Caco-2 (cell line): ENCODE measurements at regions of chr7 and their contacts with region 1.

Region 1: DNA sequence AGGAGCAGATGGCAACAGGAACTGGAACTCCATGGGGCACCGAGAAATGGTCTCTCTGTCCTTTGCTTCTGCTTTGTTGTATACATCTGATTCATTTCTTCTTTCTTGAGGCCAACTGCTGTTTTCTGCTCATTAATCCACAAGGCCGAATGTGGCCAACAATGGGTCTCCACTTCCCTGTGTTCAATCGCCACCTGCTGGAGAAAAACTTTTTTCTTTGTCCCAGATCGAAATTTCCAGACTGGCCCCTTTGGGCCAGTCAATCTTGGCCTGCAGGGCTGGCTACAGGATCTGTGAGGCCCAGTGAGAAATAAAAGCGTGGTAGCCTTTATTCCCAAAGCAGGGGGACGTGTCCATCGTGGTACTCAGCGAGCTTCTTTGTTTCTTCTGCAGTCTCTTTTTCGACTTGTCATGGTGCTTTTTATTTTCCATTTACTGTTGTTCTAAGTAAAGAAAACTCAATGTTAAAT is 58.8 kb downstream of the PARP12 start:
- DNase-seq: peak; percentile 38 to 67
- H3K4me3 ChIP-seq: no peak overlapping the region
- H3K4me3 Mint-ChIP-seq: no peak overlapping the region
- H3K27ac Mint-ChIP-seq: no peak overlapping the region
- H3K4me1 ChIP-seq: no peaks in the 10 kb centered on the region
- H3K4me1 Mint-ChIP-seq: no peaks in the 10 kb centered on the region
- H3K27me3 ChIP-seq: no peaks in the 10 kb centered on the region
- H3K27me3 Mint-ChIP-seq: no peaks in the 10 kb centered on the region
- CTCF ChIP-seq: peak; percentile 50 to 57

Region 2: DNA sequence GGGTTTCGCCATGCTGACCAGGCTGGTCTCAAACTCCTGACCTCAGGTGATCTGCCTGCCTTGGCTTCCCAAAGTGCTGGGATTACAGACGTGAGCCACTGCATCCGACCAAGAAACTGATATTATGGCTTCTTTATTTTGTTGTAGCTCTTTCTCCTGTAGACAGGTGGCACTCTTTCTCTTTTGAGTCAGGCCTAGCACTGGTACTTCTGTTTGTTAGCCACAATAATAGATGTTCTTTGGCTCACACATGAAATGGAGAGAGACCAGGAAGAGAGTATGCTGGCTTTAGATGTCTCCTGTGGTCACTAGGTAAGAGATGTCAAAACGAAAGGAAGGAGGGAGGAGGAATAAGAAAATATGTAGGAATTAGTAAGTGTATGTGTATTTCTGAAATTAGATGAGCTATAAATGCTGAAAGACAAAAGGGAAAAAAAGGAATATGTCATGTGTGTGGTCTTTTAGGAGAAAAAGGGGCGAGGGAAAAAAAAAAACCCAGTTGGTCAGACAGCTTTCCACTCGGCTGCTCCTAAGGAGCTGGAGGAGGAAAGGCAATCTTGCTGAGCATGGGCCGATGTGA is 401.7 kb before region 1 on chr7:
- CTCF ChIA-PET with region 1: interaction called, 12 read pairs
- POLR2A ChIA-PET with region 1: no interaction called
- intact Hi-C with region 1: loop called (anchors 1 kb)
- DNase-seq: peak in 1 of 2 experiments; percentile 25
- H3K4me3 ChIP-seq: no peak overlapping the region
- H3K4me3 Mint-ChIP-seq: no peak overlapping the region
- H3K27ac Mint-ChIP-seq: no peak overlapping the region
- H3K4me1 ChIP-seq: no peaks in the 10 kb centered on the region
- H3K4me1 Mint-ChIP-seq: no peaks in the 10 kb centered on the region
- H3K27me3 ChIP-seq: no peaks in the 10 kb centered on the region
- H3K27me3 Mint-ChIP-seq: no peaks in the 10 kb centered on the region
- CTCF ChIP-seq: peak; percentile 44 to 62

Region 3: DNA sequence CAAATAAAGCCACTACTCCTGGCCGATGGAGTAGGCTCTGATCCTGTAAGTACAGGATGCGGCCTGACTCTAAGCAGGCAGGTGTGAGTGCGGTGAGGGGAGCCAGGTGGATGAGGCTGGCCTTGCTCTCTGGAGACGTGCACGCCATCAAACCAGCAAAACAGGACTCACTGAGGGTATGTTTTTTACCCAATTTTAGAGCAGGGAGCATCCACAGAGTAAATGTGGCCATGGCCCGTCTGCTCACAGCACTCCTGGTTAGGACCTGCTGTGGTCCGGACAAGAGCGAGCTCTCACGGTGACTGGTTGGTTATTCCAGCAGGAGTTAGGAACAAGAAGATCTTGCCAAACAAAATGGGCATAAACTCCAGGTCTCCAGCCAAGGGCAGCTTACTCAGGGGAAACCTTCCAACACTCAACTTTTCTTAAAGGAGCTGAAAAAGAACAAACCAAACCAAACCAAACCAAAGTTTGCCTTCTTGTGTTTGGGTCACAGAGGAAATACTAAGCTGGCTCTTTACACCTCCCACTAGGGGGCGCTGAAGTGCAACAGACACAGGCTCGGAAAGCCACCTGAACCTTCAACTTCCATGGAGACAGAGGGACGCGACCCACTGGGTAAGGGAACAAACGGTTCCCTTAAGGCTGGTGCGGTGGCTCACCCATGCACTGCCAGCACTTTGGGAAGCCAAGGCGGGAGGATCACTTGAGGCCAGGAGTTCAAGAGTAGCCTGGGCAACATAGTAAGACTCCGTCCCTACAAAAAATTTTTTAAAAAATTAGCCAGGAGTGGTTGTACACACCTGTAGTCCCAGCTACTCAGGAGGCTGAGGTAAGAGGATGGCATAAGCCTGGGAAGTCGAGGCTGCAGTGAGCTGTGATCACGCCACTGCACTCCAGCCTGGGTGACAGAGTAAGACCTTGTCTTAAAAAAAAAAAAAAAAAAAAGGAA is 358.1 kb before region 1 on chr7:
- CTCF ChIA-PET with region 1: interaction called, 8 read pairs
- POLR2A ChIA-PET with region 1: no interaction called
- intact Hi-C with region 1: loop called (anchors 1 kb)
- DNase-seq: peak; percentile 83 to 88
- H3K4me3 ChIP-seq: no peak overlapping the region
- H3K4me3 Mint-ChIP-seq: no peak overlapping the region
- H3K27ac Mint-ChIP-seq: peak overlapping the region; percentile 64
- H3K4me1 ChIP-seq: peaks cover 26% of the 10 kb centered on the region; the same call in 1 of the 2 replicates
- H3K4me1 Mint-ChIP-seq: peaks cover 61% of the 10 kb centered on the region
- H3K27me3 ChIP-seq: no peaks in the 10 kb centered on the region
- H3K27me3 Mint-ChIP-seq: no peaks in the 10 kb centered on the region
- CTCF ChIP-seq: peak; percentile 80 to 90

Region 4: DNA sequence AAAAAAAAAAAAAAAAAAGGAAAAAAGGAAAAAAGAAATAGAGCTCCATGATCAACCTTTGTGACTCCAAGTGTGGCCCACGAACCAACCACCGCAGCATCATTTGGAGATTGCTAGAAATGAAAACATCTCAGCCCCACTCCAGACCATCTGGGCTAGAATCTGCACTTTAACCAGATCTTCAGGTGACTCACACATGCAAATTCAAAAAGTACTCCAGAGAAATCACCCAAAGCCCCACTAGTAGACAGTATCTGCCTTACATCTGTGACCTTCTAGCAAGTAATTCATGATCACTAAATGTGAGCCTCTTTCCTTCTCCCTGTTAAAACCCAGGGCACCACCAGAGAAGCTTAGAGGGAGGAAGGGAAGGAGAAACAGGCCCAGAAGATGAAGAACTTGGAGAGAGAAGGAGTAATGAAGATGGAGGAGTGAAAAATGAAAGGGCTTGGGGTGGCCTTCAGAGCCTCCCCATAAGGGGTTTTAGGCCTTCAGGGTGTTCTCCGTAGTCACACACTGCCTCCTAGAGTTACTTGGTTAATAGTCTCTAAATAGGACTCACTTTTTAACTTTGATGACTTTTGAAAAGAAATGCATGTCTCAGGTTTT is 300.3 kb after region 1 on chr7:
- CTCF ChIA-PET with region 1: interaction called, 11 read pairs
- POLR2A ChIA-PET with region 1: no interaction called
- intact Hi-C with region 1: no loop called
- DNase-seq: peak in 1 of 2 experiments; percentile 23
- H3K4me3 ChIP-seq: no peak overlapping the region
- H3K4me3 Mint-ChIP-seq: no peak overlapping the region
- H3K27ac Mint-ChIP-seq: no peak overlapping the region
- H3K4me1 ChIP-seq: no peaks in the 10 kb centered on the region; the same call in 1 of the 2 replicates
- H3K4me1 Mint-ChIP-seq: peaks cover 6% of the 10 kb centered on the region
- H3K27me3 ChIP-seq: no peaks in the 10 kb centered on the region
- H3K27me3 Mint-ChIP-seq: no peaks in the 10 kb centered on the region
- CTCF ChIP-seq: no peak